Activated CD4-positive, alpha-beta T cell treated with anti-CD3 and anti-CD28 coated beads, Interleukin-2, amount 10 ng/mL, durations not matched to agents 7 days and 5 days (primary cell): ENCODE measurements at regions of chr11 and their contacts with region 1.

Region 1: GRCh38 chr11:65651589-65652510 is 10.9 kb downstream of the RELA start:
- DNase-seq: peak; percentile 9
- H3K4me3 Mint-ChIP-seq: peak overlapping the region; percentile 74
- H3K27ac Mint-ChIP-seq: peak overlapping the region; percentile 87
- H3K4me1 Mint-ChIP-seq: peaks cover 42% of the 10 kb centered on the region
- H3K27me3 Mint-ChIP-seq: no peaks in the 10 kb centered on the region

Region 2: DNA sequence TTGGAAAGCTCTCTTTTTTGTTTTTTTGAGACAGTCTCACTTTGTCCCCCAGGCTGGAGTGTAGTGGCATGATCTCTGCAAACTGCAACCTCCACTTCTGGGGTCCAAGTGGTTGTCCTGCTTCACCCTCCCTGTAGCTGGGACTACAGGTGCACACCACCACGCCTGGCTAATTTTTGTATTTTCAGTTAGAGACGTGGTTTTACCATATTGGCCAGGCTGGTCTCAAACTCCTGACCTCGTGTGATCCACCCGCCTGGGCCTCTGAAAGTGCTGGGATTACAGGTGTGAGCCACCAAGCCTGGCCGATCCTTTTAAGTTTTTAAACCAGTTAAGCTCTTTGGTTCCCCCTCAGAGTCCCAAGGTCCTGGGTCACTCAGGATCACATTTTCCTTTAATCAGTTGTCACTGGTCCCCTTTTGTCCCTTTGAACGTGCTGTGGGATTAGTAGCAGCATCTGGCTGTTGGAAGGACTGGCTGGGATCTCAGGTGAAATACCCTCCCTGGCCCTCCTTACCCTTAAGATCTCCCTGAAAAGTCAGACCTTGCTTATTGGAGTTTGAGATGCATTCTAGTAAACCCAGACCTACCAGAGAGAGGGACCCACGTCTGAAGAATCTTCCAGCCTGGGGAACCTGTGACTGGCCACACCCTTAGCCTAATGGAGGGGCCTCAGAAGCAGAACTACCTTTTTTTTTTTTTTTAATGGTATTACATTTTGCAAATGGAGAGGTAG is 144.9 kb before region 1 on chr11:
- CTCF ChIA-PET with region 1: no interaction called
- POLR2A ChIA-PET with region 1: no interaction called
- DNase-seq: peak; percentile 34
- H3K4me3 Mint-ChIP-seq: no peak overlapping the region
- H3K27ac Mint-ChIP-seq: peak overlapping the region; percentile 78
- H3K4me1 Mint-ChIP-seq: peaks cover 54% of the 10 kb centered on the region
- H3K27me3 Mint-ChIP-seq: no peaks in the 10 kb centered on the region

Region 3: DNA sequence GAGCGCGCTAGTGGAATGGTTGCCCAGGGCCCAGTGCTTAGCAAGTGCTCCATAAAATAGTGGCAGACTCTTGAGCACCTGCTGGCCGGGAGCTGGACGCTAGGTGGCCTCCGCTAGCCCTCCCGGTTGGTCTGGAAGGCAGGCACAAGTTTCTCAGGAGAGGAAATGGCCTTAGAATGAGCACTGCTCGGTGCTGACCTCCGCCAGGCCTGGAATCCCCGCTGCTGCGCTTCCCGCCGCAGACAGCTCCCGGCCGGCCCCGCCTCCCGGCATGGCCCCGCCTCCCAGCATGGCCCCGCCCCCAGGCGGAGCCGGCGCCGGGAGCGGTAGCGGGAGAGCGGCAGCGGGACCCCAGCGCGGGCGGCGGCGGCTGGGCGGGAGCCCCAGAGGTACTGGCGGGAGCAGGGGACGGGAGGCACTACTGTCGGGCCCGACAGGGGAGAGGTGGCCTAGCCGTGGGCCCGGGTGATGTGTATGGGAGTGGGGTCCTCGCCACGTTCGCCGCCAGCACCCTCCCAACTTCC is 14.0 kb before region 1 on chr11 and contains the start of gene SIPA1:
- CTCF ChIA-PET with region 1: interaction called, 10 read pairs
- POLR2A ChIA-PET with region 1: interaction called, 6 read pairs
- DNase-seq: peak; percentile 70
- H3K4me3 Mint-ChIP-seq: peak within 1 kb of the TSS; percentile 83
- H3K27ac Mint-ChIP-seq: peak within 1 kb of the TSS; percentile 90
- H3K4me1 Mint-ChIP-seq: peaks cover 54% of the 10 kb centered on the region
- H3K27me3 Mint-ChIP-seq: no peaks in the 10 kb centered on the region
- total RNA-seq, gene SIPA1: 229 to 235 TPM